ENCODE measurements at regions of chr2 and their contacts with region 1.

Region 1: GRCh38 chr2:27356382-27357181 is at the start of gene GTF3C2:
- DNase-seq: peak; percentile 82 to 97 (median 93)
- ATAC-seq: peak; percentile 76
- H3K4me3 ChIP-seq: peak within 1 kb of the TSS; percentile 94 to 95
- H3K4me3 Mint-ChIP-seq: peak within 1 kb of the TSS; percentile 98
- H3K27ac ChIP-seq: peak within 1 kb of the TSS; percentile 87 to 95
- H3K27ac Mint-ChIP-seq: peak within 1 kb of the TSS; percentile 99
- H3K4me1 ChIP-seq: peaks cover 35% of the 10 kb centered on the region
- H3K4me1 Mint-ChIP-seq: peaks cover 51% of the 10 kb centered on the region
- H3K27me3 ChIP-seq: no peaks in the 10 kb centered on the region
- H3K27me3 Mint-ChIP-seq: no peaks in the 10 kb centered on the region
- CTCF ChIP-seq: no peak
- total RNA-seq, gene GTF3C2: 52.2 to 56.2 TPM

Region 2: GRCh38 chr2:27152786-27153510 is 203.6 kb before region 1 on chr2:
- CTCF ChIA-PET with region 1: no interaction called
- POLR2A ChIA-PET with region 1: no interaction called
- intact Hi-C with region 1: no loop called
- DNase-seq: no peak
- ATAC-seq: no peak
- H3K4me3 ChIP-seq: no peak overlapping the region
- H3K4me3 Mint-ChIP-seq: no peak overlapping the region
- H3K27ac ChIP-seq: no peak overlapping the region
- H3K27ac Mint-ChIP-seq: no peak overlapping the region
- H3K4me1 ChIP-seq: no peaks in the 10 kb centered on the region
- H3K4me1 Mint-ChIP-seq: no peaks in the 10 kb centered on the region
- H3K27me3 ChIP-seq: no peaks in the 10 kb centered on the region
- H3K27me3 Mint-ChIP-seq: peaks cover 11% of the 10 kb centered on the region
- CTCF ChIP-seq: no peak

Region 3: GRCh38 chr2:27217217-27218121 is 139.1 kb before region 1 on chr2 and contains the start of gene CAD:
- CTCF ChIA-PET with region 1: no interaction called
- POLR2A ChIA-PET with region 1: no interaction called
- intact Hi-C with region 1: loop called (anchors 1 to 2 kb)
- DNase-seq: peak; percentile 69 to 92 (median 85)
- ATAC-seq: peak; percentile 77
- H3K4me3 ChIP-seq: peak within 1 kb of the TSS; percentile 84
- H3K4me3 Mint-ChIP-seq: peak within 1 kb of the TSS; percentile 96
- H3K27ac ChIP-seq: peak within 1 kb of the TSS; percentile 66 to 78
- H3K27ac Mint-ChIP-seq: peak within 1 kb of the TSS; percentile 94
- H3K4me1 ChIP-seq: peaks cover 25% of the 10 kb centered on the region
- H3K4me1 Mint-ChIP-seq: peaks cover 45% of the 10 kb centered on the region
- H3K27me3 ChIP-seq: no peaks in the 10 kb centered on the region
- H3K27me3 Mint-ChIP-seq: no peaks in the 10 kb centered on the region
- CTCF ChIP-seq: no peak
- total RNA-seq, gene CAD: 24.7 to 31.4 TPM

Region 4: DNA sequence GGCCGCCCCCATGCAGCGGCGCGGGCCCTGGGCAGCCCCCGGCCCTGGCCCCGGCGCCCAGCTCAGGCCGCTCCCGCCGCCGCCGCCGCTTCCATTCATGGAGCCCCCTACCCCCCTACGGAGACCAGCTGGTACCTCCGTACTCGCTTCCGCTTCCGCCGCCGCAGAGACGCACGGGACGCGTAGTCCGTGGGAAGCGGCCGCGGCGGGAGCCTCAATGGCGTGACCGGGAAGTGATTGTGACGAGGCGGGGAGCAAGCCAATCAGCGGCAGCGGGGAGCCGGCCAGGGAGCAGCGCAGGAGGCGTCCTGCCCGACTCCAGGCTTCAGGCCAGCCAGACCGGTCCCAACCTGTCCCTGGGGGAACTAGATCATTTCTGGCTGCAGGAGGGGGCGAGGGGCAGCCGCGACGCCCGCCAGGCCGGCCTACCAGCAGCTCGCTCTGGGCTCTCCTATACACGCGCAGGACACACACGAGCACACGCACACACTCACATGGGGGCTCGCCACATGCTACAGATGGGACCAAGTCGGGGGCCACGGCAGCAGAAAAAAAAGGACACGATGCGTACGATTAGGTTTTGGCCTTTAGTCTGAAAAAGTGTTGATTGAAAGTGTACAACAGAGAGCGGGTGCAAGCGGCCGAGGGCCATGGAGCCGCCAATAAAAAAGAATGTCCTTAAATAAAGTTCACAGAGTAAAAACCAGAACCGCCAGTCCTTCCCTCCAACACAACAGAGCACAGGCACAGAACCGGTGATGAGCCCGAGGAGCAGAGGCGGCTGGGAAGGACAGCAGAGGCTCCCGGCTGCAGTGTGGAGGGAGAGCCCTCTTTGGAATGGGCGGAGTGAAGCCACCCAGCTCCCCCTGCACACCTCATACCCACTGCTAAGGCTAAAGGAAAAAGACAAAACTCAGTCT is 24.3 kb after region 1 on chr2 and contains the start of gene ZNF513:
- CTCF ChIA-PET with region 1: no interaction called
- POLR2A ChIA-PET with region 1: interaction called, 7 read pairs
- intact Hi-C with region 1: loop called (anchors 1 kb)
- DNase-seq: peak; percentile 70 to 94 (median 89)
- ATAC-seq: peak; percentile 89
- H3K4me3 ChIP-seq: peak within 1 kb of the TSS; percentile 65 to 72
- H3K4me3 Mint-ChIP-seq: peak within 1 kb of the TSS; percentile 87
- H3K27ac ChIP-seq: peak within 1 kb of the TSS; percentile 66 to 94
- H3K27ac Mint-ChIP-seq: peak within 1 kb of the TSS; percentile 94
- H3K4me1 ChIP-seq: peaks cover 17% of the 10 kb centered on the region
- H3K4me1 Mint-ChIP-seq: peaks cover 22% of the 10 kb centered on the region
- H3K27me3 ChIP-seq: no peaks in the 10 kb centered on the region
- H3K27me3 Mint-ChIP-seq: no peaks in the 10 kb centered on the region
- CTCF ChIP-seq: no peak
- total RNA-seq, gene ZNF513: 19.0 to 21.6 TPM

Region 5: GRCh38 chr2:27489498-27490397 is 133.2 kb after region 1 on chr2 and contains the start of gene IFT172:
- CTCF ChIA-PET with region 1: no interaction called
- POLR2A ChIA-PET with region 1: no interaction called
- intact Hi-C with region 1: loop called (anchors 1 kb)
- DNase-seq: peak; percentile 98 to 100 (median 99)
- ATAC-seq: peak; percentile 91
- H3K4me3 ChIP-seq: peak within 1 kb of the TSS; percentile 53 to 57
- H3K4me3 Mint-ChIP-seq: peak within 1 kb of the TSS; percentile 82
- H3K27ac ChIP-seq: peak within 1 kb of the TSS; percentile 85 to 90
- H3K27ac Mint-ChIP-seq: peak within 1 kb of the TSS; percentile 94
- H3K4me1 ChIP-seq: peaks cover 20% of the 10 kb centered on the region
- H3K4me1 Mint-ChIP-seq: peaks cover 21% of the 10 kb centered on the region
- H3K27me3 ChIP-seq: peaks cover 7 to 10% of the 10 kb centered on the region in 2 experiments
- H3K27me3 Mint-ChIP-seq: peaks cover 13% of the 10 kb centered on the region
- CTCF ChIP-seq: no peak
- total RNA-seq, gene IFT172: 15.0 to 17.2 TPM

Region 6: GRCh38 chr2:28030600-28030999 is 674.0 kb after region 1 on chr2:
- CTCF ChIA-PET with region 1: no interaction called
- POLR2A ChIA-PET with region 1: no interaction called
- intact Hi-C with region 1: no loop called
- DNase-seq: no peak
- ATAC-seq: no peak
- H3K4me3 ChIP-seq: no peak overlapping the region
- H3K4me3 Mint-ChIP-seq: no peak overlapping the region
- H3K27ac ChIP-seq: no peak overlapping the region
- H3K27ac Mint-ChIP-seq: no peak overlapping the region
- H3K4me1 ChIP-seq: no peaks in the 10 kb centered on the region
- H3K4me1 Mint-ChIP-seq: no peaks in the 10 kb centered on the region
- H3K27me3 ChIP-seq: no peaks in the 10 kb centered on the region
- H3K27me3 Mint-ChIP-seq: no peaks in the 10 kb centered on the region
- CTCF ChIP-seq: no peak

Region 7: GRCh38 chr2:28870146-28870891 is 1513.7 kb after region 1 on chr2 and contains the start of gene TRMT61B:
- CTCF ChIA-PET with region 1: no interaction called
- POLR2A ChIA-PET with region 1: no interaction called
- intact Hi-C with region 1: loop called in 1 of 2 experiments (anchors 5 kb)
- DNase-seq: peak; percentile 89 to 99 (median 97)
- ATAC-seq: peak; percentile 96
- H3K4me3 ChIP-seq: peak within 1 kb of the TSS; percentile 89 to 98
- H3K4me3 Mint-ChIP-seq: peak within 1 kb of the TSS; percentile 94
- H3K27ac ChIP-seq: peak within 1 kb of the TSS; percentile 94 to 95
- H3K27ac Mint-ChIP-seq: peak within 1 kb of the TSS; percentile 99
- H3K4me1 ChIP-seq: peaks cover 28% of the 10 kb centered on the region
- H3K4me1 Mint-ChIP-seq: peaks cover 33% of the 10 kb centered on the region
- H3K27me3 ChIP-seq: no peaks in the 10 kb centered on the region
- H3K27me3 Mint-ChIP-seq: no peaks in the 10 kb centered on the region
- CTCF ChIP-seq: no peak
- total RNA-seq, gene TRMT61B: 17.9 to 22.9 TPM

Measured in CD8-positive, alpha-beta T cell (primary cell).